H1 (cell line): ENCODE measurements at regions of chr3 and their contacts with region 1.

Region 1: DNA sequence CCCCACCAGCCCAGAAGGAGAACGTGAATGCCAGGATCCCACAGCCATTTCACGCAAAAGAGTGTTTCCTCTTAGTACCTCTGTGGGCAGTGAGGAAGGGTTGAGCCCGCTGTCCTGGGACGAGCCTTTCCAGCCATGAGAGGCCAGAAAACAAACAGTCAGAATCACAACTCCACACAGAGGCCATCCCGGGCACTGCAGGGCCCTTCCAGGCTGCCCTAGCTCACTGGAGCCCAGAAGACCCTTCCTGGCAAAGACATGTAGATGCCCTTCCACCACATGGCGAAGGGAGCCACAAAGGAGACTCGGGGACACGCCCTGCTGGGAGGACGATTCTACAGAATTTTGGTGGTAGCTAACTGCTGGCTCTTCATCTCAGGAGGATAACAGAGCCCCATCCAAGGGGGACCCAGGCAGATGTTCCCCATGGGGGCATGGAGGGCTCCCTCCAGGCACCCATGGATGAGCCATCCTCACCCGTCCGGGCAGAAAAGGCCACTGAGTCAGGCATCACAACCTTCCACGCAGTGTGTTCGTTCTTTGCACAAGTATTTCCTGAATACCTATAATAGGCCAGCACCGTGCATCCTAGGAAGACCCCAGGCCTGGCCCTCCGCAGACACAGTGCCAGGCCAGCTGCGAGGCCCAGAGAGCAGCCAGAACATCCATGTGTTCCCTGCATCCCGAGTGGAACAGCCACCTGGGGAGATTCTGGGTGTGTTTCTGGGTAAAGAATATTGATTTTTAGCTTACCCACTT is 47.2 kb downstream of the SLC12A8 start:
- DNase-seq: peak in 1 of 2 experiments; percentile 73
- H3K4me3 ChIP-seq: no peak overlapping the region
- H3K27ac ChIP-seq: no peak overlapping the region
- H3K4me1 ChIP-seq: peaks cover 0 to 2% (median 0%) of the 10 kb centered on the region in 4 experiments; a peak in 4 of 7 replicates
- H3K27me3 ChIP-seq: no peaks in the 10 kb centered on the region
- CTCF ChIP-seq: peak; percentile 67 to 85 (median 77)
- EP300 ChIP-seq: no peak
- POLR2A ChIP-seq: no peak
- RAD21 ChIP-seq: peak; percentile 68 to 76

Region 2: DNA sequence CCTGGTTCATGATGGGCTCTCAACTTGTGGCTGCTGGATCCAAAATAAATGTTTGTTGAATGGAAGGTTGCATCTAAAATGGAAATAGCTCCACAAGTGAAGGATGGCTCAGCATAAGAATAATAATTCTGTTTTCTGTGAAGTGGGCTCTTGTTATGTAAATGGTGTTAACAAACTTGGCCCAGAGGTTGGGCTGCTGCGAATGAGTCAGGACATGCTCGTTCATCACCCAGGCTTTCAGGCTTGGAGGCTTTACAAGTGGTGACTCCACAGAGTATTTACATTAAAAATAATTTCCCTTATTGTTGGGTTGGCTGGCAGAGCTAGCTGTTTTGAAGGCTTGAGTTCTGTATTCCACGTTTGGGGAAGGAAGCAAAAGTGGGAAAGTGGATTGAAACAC is 338.7 kb before region 1 on chr3:
- CTCF ChIA-PET with region 1: no interaction called
- POLR2A ChIA-PET with region 1: no interaction called
- DNase-seq: peak in 1 of 2 experiments; percentile 41
- H3K4me3 ChIP-seq: peak overlapping the region in 1 of 4 experiments; percentile 23; a peak in 1 of 8 replicates
- H3K27ac ChIP-seq: peak overlapping the region; percentile 44; the same call in 1 of the 2 replicates
- H3K4me1 ChIP-seq: peaks cover 7 to 27% (median 21%) of the 10 kb centered on the region in 4 experiments
- H3K27me3 ChIP-seq: no peaks in the 10 kb centered on the region
- CTCF ChIP-seq: no peak
- EP300 ChIP-seq: no peak
- POLR2A ChIP-seq: 0 out of 3 replicates have a peak, but pooled peaks of 1 of the 2 experiments have one; percentile 45
- RAD21 ChIP-seq: no peak

Region 3: GRCh38 chr3:125141596-125142419 is 23.6 kb before region 1 on chr3:
- CTCF ChIA-PET with region 1: interaction called, 14 read pairs
- POLR2A ChIA-PET with region 1: interaction called, 6 read pairs
- DNase-seq: peak in 1 of 2 experiments; percentile 81
- H3K4me3 ChIP-seq: peak overlapping the region; percentile 30 to 69 (median 39)
- H3K27ac ChIP-seq: no peak overlapping the region
- H3K4me1 ChIP-seq: peaks cover 11 to 34% (median 26%) of the 10 kb centered on the region in 4 experiments
- H3K27me3 ChIP-seq: peaks cover 0 to 8% (median 5%) of the 10 kb centered on the region in 4 experiments; a peak in 5 of 7 replicates
- CTCF ChIP-seq: peak; percentile 33 to 44 (median 44); a peak in 3 of 4 replicates
- EP300 ChIP-seq: no peak
- POLR2A ChIP-seq: no peak
- RAD21 ChIP-seq: peak; percentile 31 to 52

Region 4: GRCh38 chr3:125150525-125151441 is 14.6 kb before region 1 on chr3:
- CTCF ChIA-PET with region 1: interaction called, 56 read pairs
- POLR2A ChIA-PET with region 1: no interaction called
- DNase-seq: peak in 1 of 2 experiments; percentile 85
- H3K4me3 ChIP-seq: no peak overlapping the region
- H3K27ac ChIP-seq: no peak overlapping the region
- H3K4me1 ChIP-seq: peaks cover 3 to 10% (median 4%) of the 10 kb centered on the region in 4 experiments; a peak in 4 of 7 replicates
- H3K27me3 ChIP-seq: no peaks in the 10 kb centered on the region
- CTCF ChIP-seq: peak; percentile 60 to 93 (median 71)
- EP300 ChIP-seq: no peak
- POLR2A ChIP-seq: no peak
- RAD21 ChIP-seq: peak; percentile 62 to 78

Region 5: GRCh38 chr3:125179143-125179883 is 13.9 kb after region 1 on chr3:
- CTCF ChIA-PET with region 1: interaction called, 11 read pairs
- POLR2A ChIA-PET with region 1: interaction called, 3 read pairs
- DNase-seq: no peak
- H3K4me3 ChIP-seq: no peak overlapping the region
- H3K27ac ChIP-seq: no peak overlapping the region
- H3K4me1 ChIP-seq: peaks cover 0 to 8% (median 3%) of the 10 kb centered on the region in 4 experiments; a peak in 4 of 7 replicates
- H3K27me3 ChIP-seq: no peaks in the 10 kb centered on the region
- CTCF ChIP-seq: no peak
- EP300 ChIP-seq: no peak
- POLR2A ChIP-seq: no peak
- RAD21 ChIP-seq: no peak

Region 6: DNA sequence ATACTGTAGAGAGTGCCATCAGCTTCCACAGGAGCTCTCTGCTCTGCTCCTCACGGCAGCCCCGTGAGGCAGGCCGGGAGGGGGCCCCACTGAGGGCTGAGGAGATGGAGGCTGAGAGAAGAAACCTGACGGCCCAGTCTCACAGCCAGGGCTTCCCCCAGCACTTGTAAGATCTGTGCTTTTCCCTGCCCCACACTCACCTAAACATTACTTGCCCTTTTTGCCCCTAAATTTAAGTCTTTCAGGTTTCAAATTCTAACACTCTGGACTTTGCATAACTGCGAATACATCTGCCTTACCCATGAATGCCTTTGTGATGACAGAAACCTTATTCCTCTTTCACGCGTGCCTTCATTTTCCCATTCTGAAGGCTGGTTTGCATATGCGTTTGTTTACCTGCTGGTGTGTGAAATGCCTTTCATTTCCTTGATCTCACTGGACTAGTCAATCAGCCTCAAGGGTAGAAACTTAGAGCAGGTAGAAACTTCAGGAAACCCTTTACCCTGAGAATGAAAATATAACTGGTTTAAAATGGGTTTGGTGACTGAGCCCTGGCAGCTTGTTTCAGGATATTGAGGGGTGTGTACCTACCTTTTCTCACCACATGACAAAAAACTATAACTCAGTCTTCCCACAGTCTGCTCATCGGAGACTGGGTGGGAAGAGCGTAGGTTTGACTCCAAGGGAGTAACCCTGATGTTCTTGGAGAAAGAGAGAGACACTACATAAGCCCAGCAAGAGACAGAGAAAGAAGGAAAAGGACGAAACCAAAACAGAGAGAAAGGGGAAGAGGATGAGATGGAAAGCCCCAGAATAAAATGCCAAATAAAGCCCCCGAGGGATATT is 27.0 kb after region 1 on chr3:
- CTCF ChIA-PET with region 1: interaction called, 14 read pairs
- POLR2A ChIA-PET with region 1: no interaction called
- DNase-seq: no peak
- H3K4me3 ChIP-seq: no peak overlapping the region
- H3K27ac ChIP-seq: no peak overlapping the region; the same call in 1 of the 2 replicates
- H3K4me1 ChIP-seq: peaks cover 0 to 10% (median 6%) of the 10 kb centered on the region in 4 experiments; a peak in 6 of 7 replicates
- H3K27me3 ChIP-seq: no peaks in the 10 kb centered on the region
- CTCF ChIP-seq: peak; percentile 34 to 42 (median 40); a peak in 3 of 4 replicates
- EP300 ChIP-seq: no peak
- POLR2A ChIP-seq: no peak
- RAD21 ChIP-seq: peak in 1 of 2 experiments; percentile 51; a peak in 2 of 4 replicates